Caco-2 (cell line): ENCODE measurements at regions of chr4 and their contacts with region 1.

Region 1: GRCh38 chr4:52861879-52862616 is at the start of gene RASL11B:
- DNase-seq: peak; percentile 78 to 93
- H3K4me3 ChIP-seq: peak within 1 kb of the TSS; percentile 95
- H3K4me3 Mint-ChIP-seq: peak within 1 kb of the TSS; percentile 86
- H3K27ac Mint-ChIP-seq: peak within 1 kb of the TSS; percentile 70
- H3K4me1 ChIP-seq: peaks cover 20% of the 10 kb centered on the region
- H3K4me1 Mint-ChIP-seq: no peaks in the 10 kb centered on the region
- H3K27me3 ChIP-seq: no peaks in the 10 kb centered on the region
- H3K27me3 Mint-ChIP-seq: no peaks in the 10 kb centered on the region
- CTCF ChIP-seq: peak in 1 of 2 experiments; percentile 21
- total RNA-seq, gene RASL11B: 19.6 and 23.3 TPM in 2 replicates

Region 2: DNA sequence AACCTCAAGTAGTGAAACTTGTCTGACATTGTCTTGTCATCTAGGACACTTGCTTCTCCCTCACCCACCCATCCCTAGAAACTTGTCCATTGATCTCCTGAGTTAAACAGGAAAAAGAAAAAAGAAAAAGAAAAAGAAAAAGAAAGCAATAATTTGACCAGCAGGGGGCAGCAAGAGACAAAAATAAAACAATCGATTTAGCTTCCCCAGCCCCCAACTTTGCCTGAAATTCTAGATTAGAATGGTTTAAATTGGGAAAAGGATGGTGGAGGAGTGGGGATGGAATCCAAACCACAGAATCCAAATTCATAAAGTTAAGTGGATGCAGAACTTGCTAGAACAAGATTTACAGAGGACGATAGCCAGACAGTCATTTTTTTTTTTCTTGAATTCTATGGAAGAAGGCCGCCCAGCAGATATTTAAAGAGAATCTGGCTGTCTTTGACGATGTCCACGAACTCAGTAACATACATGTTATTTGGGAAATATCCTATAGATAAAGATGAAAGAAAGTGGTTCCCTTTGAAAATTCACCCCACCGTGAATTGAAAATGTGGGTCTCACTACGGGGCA is 485.8 kb before region 1 on chr4:
- CTCF ChIA-PET with region 1: no interaction called
- POLR2A ChIA-PET with region 1: no interaction called
- intact Hi-C with region 1: loop called (anchors 1 kb)
- DNase-seq: peak in 1 of 2 experiments; percentile 53
- H3K4me3 ChIP-seq: no peak overlapping the region
- H3K4me3 Mint-ChIP-seq: no peak overlapping the region
- H3K27ac Mint-ChIP-seq: no peak overlapping the region
- H3K4me1 ChIP-seq: no peaks in the 10 kb centered on the region
- H3K4me1 Mint-ChIP-seq: no peaks in the 10 kb centered on the region
- H3K27me3 ChIP-seq: no peaks in the 10 kb centered on the region
- H3K27me3 Mint-ChIP-seq: peaks cover 21% of the 10 kb centered on the region
- CTCF ChIP-seq: peak; percentile 42 to 61

Region 3: GRCh38 chr4:52712172-52712990 is 149.7 kb before region 1 on chr4:
- CTCF ChIA-PET with region 1: no interaction called
- POLR2A ChIA-PET with region 1: interaction called, 5 read pairs
- intact Hi-C with region 1: loop called (anchors 2 kb)
- DNase-seq: peak; percentile 98 to 99
- H3K4me3 ChIP-seq: peak overlapping the region; percentile 73
- H3K4me3 Mint-ChIP-seq: peak overlapping the region; percentile 88
- H3K27ac Mint-ChIP-seq: peak overlapping the region; percentile 93
- H3K4me1 ChIP-seq: peaks cover 11% of the 10 kb centered on the region
- H3K4me1 Mint-ChIP-seq: peaks cover 12% of the 10 kb centered on the region
- H3K27me3 ChIP-seq: no peaks in the 10 kb centered on the region
- H3K27me3 Mint-ChIP-seq: peaks cover 3% of the 10 kb centered on the region
- CTCF ChIP-seq: no peak

Region 4: GRCh38 chr4:52750819-52751486 is 111.1 kb before region 1 on chr4 and contains the start of gene ERVMER34-1:
- CTCF ChIA-PET with region 1: no interaction called
- POLR2A ChIA-PET with region 1: interaction called, 4 read pairs
- intact Hi-C with region 1: loop called (anchors 5 kb)
- DNase-seq: peak in 1 of 2 experiments; percentile 53
- H3K4me3 ChIP-seq: peak within 1 kb of the TSS; percentile 77
- H3K4me3 Mint-ChIP-seq: peak within 1 kb of the TSS; percentile 98
- H3K27ac Mint-ChIP-seq: peak within 1 kb of the TSS; percentile 91
- H3K4me1 ChIP-seq: peaks cover 8% of the 10 kb centered on the region; the same call in 1 of the 2 replicates
- H3K4me1 Mint-ChIP-seq: peaks cover 10% of the 10 kb centered on the region
- H3K27me3 ChIP-seq: no peaks in the 10 kb centered on the region
- H3K27me3 Mint-ChIP-seq: no peaks in the 10 kb centered on the region
- CTCF ChIP-seq: no peak
- total RNA-seq, gene ERVMER34-1: 73.3 and 85.6 TPM in 2 replicates

Region 5: DNA sequence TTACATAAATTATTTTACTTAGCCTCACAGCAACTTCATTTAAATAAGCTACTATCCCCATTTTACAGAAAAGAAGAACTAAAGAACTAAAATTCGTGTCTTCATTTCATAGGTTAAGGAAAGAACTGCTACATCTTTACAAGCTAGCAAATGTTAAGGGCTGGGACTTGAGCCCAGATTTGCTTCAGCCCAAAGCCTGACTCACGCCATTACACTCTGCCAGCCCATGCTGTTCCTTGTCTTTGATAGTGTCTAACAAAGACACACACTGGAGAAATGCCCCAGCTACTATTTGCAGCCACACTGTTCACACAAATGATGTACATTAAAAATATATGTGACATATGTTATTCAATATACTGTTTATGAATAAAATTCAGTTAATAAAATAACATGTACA is 81.8 kb before region 1 on chr4:
- CTCF ChIA-PET with region 1: no interaction called
- POLR2A ChIA-PET with region 1: no interaction called
- intact Hi-C with region 1: loop called (anchors 10 kb)
- DNase-seq: no peak
- H3K4me3 ChIP-seq: no peak overlapping the region
- H3K4me3 Mint-ChIP-seq: no peak overlapping the region
- H3K27ac Mint-ChIP-seq: no peak overlapping the region
- H3K4me1 ChIP-seq: no peaks in the 10 kb centered on the region
- H3K4me1 Mint-ChIP-seq: no peaks in the 10 kb centered on the region
- H3K27me3 ChIP-seq: no peaks in the 10 kb centered on the region
- H3K27me3 Mint-ChIP-seq: peaks cover 2% of the 10 kb centered on the region
- CTCF ChIP-seq: no peak

Region 6: DNA sequence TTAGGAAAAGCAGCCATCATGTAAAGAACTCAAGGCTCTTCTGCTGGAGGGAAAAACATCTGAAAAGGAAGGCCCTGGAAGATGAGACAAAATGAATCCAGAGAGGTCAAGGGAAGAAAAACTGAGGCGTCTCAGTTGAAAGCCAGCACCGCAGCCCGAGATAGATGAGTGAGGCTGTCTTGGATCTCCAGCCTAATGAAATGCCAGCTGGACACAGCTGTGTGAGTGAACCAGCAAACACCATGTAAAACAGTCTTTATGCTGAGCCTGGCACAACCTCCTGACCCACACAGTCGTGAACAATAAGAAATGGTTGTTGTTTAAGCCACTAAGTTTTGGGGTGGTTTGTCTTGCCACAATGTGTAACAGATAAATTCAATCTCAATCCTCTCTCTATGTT is 48.5 kb before region 1 on chr4:
- CTCF ChIA-PET with region 1: no interaction called
- POLR2A ChIA-PET with region 1: no interaction called
- intact Hi-C with region 1: no loop called
- DNase-seq: no peak
- H3K4me3 ChIP-seq: no peak overlapping the region
- H3K4me3 Mint-ChIP-seq: no peak overlapping the region
- H3K27ac Mint-ChIP-seq: no peak overlapping the region
- H3K4me1 ChIP-seq: no peaks in the 10 kb centered on the region
- H3K4me1 Mint-ChIP-seq: peaks cover 6% of the 10 kb centered on the region
- H3K27me3 ChIP-seq: no peaks in the 10 kb centered on the region
- H3K27me3 Mint-ChIP-seq: no peaks in the 10 kb centered on the region
- CTCF ChIP-seq: no peak

Region 7: DNA sequence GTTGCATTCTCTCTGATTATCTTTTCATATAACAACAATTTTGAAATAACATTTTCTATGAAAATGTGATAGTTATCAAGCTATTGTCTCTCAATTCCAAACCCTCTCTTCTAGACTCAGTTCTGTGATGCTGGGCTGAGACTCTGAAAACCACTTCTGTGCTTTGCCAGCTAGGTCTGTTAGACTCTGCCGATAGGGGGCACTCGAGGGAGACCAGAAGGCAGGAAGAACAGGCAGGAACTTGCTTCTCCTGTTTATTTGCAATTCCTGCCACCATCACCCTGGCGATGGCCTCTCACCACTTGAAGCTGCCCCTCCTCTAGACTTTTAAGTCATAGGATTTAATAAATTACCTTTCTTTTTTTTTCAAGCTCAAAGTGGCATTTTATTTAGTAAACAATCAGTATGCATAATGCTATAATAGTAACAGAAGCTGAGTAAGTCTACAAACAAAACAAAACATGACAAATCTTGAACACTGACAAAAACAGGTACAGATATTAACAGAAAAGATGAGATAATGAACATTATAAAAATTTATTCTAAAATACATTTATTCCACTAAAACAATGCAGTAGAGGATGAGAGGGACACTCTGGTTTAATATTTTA is 49.7 kb after region 1 on chr4:
- CTCF ChIA-PET with region 1: no interaction called
- POLR2A ChIA-PET with region 1: interaction called, 3 read pairs
- intact Hi-C with region 1: loop called (anchors 5 kb)
- DNase-seq: peak; percentile 80 to 82
- H3K4me3 ChIP-seq: no peak overlapping the region
- H3K4me3 Mint-ChIP-seq: no peak overlapping the region
- H3K27ac Mint-ChIP-seq: peak overlapping the region; percentile 39
- H3K4me1 ChIP-seq: peaks cover 58% of the 10 kb centered on the region
- H3K4me1 Mint-ChIP-seq: peaks cover 25% of the 10 kb centered on the region
- H3K27me3 ChIP-seq: no peaks in the 10 kb centered on the region
- H3K27me3 Mint-ChIP-seq: no peaks in the 10 kb centered on the region
- CTCF ChIP-seq: peak; percentile 52 to 67

Region 8: DNA sequence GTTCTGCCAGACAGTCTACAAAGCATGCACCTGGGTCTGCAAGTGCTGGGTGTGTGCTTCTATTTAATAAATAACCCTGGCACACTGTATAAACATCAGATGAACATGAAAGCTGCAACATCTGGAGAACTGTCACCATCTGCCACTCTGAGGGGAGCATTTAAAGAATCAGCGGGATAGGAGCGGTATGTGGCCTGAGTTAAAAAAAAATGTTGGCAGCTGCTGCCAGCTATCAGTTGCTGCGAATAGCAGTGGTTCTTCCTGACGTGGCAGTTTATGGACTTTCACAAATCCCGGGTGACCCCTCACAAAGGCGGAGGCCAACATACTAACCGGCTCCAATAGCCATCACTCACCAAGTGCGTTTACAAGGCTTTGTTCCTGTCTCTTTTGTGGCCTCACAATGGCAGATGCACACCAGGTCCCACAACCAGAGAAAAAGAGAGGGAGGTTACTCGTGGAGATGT is 95.2 kb after region 1 on chr4:
- CTCF ChIA-PET with region 1: no interaction called
- POLR2A ChIA-PET with region 1: no interaction called
- intact Hi-C with region 1: loop called (anchors 10 kb)
- DNase-seq: no peak
- H3K4me3 ChIP-seq: no peak overlapping the region
- H3K4me3 Mint-ChIP-seq: no peak overlapping the region
- H3K27ac Mint-ChIP-seq: no peak overlapping the region
- H3K4me1 ChIP-seq: peaks cover 13% of the 10 kb centered on the region; the same call in 1 of the 2 replicates
- H3K4me1 Mint-ChIP-seq: peaks cover 20% of the 10 kb centered on the region
- H3K27me3 ChIP-seq: no peaks in the 10 kb centered on the region
- H3K27me3 Mint-ChIP-seq: no peaks in the 10 kb centered on the region
- CTCF ChIP-seq: no peak